ENCODE measurements at regions of chr5 and their contacts with region 1.

Region 1: DNA sequence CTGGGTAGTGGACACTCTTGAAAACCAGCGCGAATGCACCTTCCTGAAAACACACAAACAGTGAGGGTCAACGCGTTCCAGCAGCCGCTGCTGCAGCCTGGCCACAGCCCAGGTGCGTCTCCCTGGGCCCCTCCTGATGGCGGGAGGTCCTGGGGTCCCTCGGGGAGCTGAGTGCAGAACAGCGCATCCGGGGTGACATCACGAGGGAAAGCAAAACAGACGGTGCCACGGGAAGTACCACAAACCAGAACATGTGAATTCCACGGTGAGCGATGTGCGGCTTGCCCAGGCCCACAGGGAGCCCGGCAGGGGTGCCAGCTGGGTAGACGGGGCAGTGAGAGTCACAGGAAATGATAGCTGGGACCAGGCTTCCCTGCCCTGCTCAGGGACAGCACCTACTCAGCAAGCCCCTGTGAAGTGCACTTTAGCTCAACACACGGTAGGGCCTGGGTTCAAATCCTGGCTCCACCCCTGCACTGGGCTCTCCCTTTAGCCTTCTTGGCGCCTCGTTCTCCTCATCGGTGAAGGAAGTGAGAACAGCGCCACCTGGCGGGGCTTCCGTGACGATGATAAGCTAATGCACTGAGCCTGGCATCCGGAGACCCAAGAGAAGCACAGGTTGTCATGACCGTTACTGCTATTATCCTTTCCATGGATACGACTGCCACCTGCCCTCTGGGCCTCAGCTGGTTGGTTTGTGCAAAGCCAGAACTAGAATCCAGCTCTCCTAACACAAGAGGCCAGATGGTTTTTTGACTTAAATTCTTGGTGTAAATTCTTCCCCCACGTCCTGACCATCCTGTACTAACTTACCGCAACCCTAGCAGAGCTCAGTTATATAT is 24.6 kb downstream of the GFPT2 start:
- DNase-seq: peak; percentile 84
- H3K4me3 Mint-ChIP-seq: no peak overlapping the region
- H3K27ac Mint-ChIP-seq: no peak overlapping the region
- H3K4me1 Mint-ChIP-seq: no peaks in the 10 kb centered on the region
- H3K27me3 Mint-ChIP-seq: peaks cover 15% of the 10 kb centered on the region

Region 2: DNA sequence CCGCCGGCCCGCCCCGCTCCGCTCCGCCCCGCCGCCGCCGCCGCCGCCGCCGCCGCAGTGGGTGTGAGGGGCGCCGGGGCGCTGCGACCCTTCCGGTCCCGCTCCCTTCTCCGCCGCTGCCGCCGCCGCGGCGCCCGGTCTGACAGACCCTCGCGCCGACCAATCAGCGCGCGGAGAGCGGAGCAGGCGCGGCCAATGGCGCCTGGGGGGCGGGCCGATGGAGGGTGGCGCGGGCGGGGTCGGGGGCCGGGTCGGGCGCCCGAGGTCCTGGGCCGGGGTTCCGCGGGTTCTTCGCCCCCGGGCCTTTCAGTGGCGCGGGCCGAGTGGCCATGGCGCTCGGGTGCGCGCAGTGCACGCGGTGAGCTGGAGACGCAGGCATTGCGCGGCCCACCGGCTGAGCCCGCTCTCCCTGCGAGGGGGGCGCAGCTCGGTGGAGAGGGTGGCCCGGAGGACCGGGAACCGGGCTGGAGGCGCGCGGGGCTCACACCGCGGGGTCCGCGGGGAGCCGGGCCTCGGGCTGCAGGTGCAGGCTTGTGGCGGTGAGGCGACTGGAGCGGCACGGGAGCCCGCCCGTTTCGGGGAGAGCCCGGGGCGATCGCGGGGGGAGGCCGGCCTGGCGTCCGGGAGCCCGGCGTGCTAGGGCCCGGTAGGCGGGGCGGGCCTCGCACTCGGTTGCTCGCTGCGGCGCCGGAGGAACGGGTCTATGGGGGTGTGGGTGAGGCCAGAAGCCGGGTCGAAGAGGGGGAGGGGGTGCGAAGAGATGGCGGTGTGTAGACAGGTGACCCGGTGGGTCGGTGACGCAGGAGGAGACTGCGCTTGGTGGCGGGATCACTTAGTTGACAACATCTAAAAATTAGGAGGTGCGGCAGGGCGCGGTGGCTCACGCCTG is 36.3 kb before region 1 on chr5 and contains the start of gene MAPK9:
- CTCF ChIA-PET with region 1: interaction called, 49 read pairs
- POLR2A ChIA-PET with region 1: interaction called, 7 read pairs
- DNase-seq: peak; percentile 87
- H3K4me3 Mint-ChIP-seq: peak within 1 kb of the TSS; percentile 96
- H3K27ac Mint-ChIP-seq: peak within 1 kb of the TSS; percentile 96
- H3K4me1 Mint-ChIP-seq: peaks cover 25% of the 10 kb centered on the region
- H3K27me3 Mint-ChIP-seq: no peaks in the 10 kb centered on the region
- total RNA-seq, gene MAPK9: 42.5 to 44.4 TPM

Region 3: DNA sequence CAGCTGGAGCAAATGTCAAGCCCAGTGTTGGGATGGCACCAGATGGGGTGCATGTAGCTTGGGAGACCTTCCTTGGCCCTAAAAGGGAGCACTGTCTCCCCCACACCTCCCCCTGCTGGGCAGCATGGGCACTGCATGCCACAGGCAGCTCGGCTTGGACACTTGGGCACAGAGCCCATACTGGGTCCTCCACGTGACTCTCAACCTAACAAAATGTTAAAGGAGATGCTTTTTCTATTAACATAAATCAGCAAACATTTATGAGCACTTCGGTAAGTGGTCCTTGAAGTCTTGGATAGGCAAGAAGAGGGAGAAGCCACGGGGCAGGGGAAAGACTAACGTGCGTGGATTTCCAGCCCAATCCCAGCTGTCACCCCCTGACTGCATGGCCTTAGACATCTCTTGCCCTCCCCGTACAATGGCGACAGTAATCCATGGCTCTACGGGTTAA is 12.7 kb before region 1 on chr5:
- CTCF ChIA-PET with region 1: interaction called, 33 read pairs
- POLR2A ChIA-PET with region 1: no interaction called
- DNase-seq: peak; percentile 71
- H3K4me3 Mint-ChIP-seq: no peak overlapping the region
- H3K27ac Mint-ChIP-seq: no peak overlapping the region
- H3K4me1 Mint-ChIP-seq: peaks cover 9% of the 10 kb centered on the region
- H3K27me3 Mint-ChIP-seq: peaks cover 3% of the 10 kb centered on the region

Region 4: GRCh38 chr5:180343831-180344327 is 15.4 kb after region 1 on chr5:
- CTCF ChIA-PET with region 1: interaction called, 11 read pairs
- POLR2A ChIA-PET with region 1: no interaction called
- DNase-seq: no peak
- H3K4me3 Mint-ChIP-seq: no peak overlapping the region
- H3K27ac Mint-ChIP-seq: no peak overlapping the region
- H3K4me1 Mint-ChIP-seq: no peaks in the 10 kb centered on the region
- H3K27me3 Mint-ChIP-seq: peaks cover 9% of the 10 kb centered on the region

Region 5: DNA sequence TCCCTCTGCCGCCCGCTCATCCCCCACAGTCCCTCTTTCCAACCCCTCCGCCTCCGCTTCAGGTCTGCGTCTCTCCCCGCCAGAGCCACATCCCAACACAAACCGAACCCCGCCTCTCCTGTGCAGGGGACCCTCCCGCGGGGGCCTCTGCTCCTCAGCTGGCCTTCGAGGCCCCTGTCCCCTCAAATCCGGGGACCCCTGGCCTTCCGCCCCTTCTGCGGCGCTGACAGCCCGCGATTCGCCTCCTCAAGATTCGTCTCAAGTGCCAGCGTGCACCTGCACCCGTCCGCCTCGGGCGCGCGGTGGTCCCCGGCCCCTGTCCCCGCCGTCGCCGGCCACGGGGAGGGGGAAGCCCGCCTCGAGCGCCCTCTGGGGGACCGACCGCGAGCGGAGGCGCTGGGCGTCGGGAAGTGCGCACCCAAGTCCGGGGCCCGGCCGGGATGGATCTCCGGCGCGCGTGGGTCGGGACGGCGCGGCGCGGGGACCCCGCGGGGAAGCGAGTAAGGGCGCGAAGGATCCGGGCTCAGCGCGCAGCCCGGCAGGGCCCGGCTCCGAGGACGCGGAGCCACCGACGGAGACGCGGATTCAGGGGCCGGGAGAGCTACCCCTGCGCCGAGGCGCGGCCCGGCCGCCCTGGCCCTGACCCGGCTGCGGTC is 320.3 kb after region 1 on chr5:
- CTCF ChIA-PET with region 1: no interaction called
- POLR2A ChIA-PET with region 1: no interaction called
- DNase-seq: no peak
- H3K4me3 Mint-ChIP-seq: peak overlapping the region; percentile 56
- H3K27ac Mint-ChIP-seq: no peak overlapping the region
- H3K4me1 Mint-ChIP-seq: peaks cover 11% of the 10 kb centered on the region
- H3K27me3 Mint-ChIP-seq: peaks cover 42% of the 10 kb centered on the region

Measured in activated CD4-positive, alpha-beta memory T cell treated with anti-CD3 and anti-CD28 coated beads, Interleukin-2, amount 10 ng/mL, durations not matched to agents 7 days and 5 days (primary cell).